ENCODE measurements at regions of chr22 and their contacts with region 1.

Region 1: DNA sequence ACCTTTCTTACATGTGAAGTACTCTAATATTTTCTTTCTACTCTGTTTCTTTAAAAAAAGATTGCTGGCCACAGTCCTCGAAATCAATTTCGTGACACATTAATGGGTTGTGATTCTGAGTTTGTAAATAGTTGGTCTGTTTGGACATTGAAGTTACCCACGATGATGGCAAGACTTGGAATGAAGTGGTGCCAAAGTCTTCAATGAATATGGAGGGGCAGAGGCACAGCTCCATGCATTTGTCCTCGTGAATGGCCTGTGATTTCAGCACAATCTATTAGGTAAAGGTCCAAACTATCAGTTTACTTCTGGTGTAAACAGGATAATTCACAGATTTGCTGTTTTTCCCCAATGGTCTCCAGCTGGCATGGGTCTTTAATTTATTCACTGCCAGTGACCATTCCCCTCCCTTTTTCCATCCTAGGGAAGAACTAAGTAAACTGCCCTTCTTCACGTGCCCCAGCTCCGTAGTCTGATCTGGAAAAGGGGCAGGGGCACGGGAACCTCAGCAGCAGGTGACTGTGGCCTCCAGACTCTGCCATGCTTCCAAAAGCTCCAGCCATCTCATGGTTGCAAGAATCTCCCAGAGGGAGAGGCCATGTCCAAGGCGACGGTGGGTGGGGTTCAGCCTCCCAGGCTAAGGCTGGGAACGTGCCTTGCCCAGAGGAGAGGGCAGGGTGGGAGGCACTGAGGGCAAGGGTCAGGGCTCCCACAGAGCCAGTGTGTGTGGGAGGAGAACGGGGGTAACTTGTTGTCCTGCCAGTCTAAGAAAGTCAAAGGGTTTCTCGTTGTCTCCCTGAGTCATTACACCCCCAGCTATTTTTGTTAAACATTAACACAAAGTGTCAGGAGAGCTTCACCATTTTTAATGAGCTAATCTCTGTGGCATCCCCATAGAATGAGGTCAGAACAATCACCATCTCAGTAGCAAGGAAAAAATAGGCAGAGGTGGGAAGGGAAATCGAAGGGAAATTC is 16.9 kb upstream of the PEX26 start:
- DNase-seq: no peak
- H3K4me3 ChIP-seq: no peak overlapping the region
- H3K4me1 ChIP-seq: peaks cover 4% of the 10 kb centered on the region; the same call in 1 of the 2 replicates
- H3K27me3 ChIP-seq: peaks cover 12% of the 10 kb centered on the region

Region 2: DNA sequence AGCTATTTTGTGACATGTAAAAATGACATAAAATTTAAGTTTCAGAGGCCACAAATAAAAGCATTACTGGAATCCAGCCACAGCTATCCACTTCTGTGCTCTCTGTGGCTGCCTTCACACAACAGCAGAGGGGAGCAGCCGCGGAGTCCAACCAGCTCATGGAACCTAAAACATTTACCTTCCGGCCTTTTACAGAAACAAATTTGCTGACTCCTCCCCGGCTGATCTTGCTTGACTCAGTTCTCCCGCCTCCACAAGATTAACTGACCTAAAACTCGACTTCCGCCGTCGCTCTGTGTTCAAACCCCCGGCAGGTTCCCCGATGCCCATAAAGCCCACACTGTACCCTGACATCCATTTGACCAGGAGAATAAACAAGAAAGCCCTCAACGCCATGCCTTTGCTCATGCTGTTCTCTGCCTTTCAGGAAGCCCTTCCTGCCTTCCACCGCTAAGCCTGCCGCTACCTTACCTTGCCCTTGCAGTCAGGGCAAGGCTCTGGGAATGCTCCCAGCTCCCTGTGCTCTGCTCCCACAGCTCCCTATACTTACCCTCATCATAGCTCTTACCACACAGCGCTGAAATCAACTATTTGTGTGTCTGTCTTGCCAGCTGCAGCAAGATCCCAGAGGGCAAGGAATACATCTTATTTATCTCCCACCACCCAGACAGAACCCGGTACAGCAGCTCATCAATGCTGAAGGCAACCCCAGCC is 72.0 kb before region 1 on chr22:
- in situ Hi-C with region 1: no loop called
- DNase-seq: no peak
- H3K4me3 ChIP-seq: no peak overlapping the region
- H3K4me1 ChIP-seq: no peaks in the 10 kb centered on the region
- H3K27me3 ChIP-seq: no peaks in the 10 kb centered on the region

Region 3: DNA sequence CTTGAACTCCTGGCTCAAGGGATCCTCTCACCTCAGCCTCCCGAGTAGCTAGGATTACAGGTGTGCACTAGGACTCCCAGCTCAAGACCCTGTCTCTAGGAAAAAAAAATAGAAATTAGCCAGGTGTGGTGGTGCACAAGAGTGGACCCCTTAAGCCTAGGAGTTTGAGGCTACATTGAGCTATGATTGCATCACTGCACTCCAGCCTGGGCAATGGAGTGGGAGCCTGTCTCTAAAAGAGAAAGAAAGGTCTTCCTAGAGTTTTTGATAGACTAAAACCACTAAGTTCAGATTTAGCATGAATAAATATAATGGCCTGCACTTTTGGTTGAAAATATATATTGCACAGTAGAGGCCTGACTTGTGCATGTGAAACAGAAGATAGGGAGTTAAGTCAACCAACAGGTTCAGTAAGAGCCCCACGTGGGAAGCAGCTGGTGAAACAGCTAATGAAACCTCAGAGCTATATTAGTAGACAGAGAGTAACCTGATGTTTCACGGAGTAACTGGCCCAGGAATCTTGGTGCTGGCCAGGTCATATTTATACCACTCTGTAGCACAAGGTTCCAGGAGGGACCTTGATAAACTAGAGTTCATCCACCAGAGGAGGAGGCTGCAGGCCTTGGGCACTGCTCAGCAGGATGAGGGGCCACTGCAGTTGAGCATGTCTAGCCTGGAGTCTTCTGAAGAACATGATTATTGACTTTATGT is 32.0 kb before region 1 on chr22:
- in situ Hi-C with region 1: loop called (anchors 5 kb)
- DNase-seq: no peak
- H3K4me3 ChIP-seq: no peak overlapping the region
- H3K4me1 ChIP-seq: peaks cover 3% of the 10 kb centered on the region
- H3K27me3 ChIP-seq: no peaks in the 10 kb centered on the region

Measured in HAP-1 (cell line).